HEK293T (cell line): ENCODE measurements at regions of chr1 and their contacts with region 1.

Region 1: GRCh38 chr1:225777583-225778336 is at the start of gene SRP9:
- DNase-seq: peak; percentile 99

Region 2: DNA sequence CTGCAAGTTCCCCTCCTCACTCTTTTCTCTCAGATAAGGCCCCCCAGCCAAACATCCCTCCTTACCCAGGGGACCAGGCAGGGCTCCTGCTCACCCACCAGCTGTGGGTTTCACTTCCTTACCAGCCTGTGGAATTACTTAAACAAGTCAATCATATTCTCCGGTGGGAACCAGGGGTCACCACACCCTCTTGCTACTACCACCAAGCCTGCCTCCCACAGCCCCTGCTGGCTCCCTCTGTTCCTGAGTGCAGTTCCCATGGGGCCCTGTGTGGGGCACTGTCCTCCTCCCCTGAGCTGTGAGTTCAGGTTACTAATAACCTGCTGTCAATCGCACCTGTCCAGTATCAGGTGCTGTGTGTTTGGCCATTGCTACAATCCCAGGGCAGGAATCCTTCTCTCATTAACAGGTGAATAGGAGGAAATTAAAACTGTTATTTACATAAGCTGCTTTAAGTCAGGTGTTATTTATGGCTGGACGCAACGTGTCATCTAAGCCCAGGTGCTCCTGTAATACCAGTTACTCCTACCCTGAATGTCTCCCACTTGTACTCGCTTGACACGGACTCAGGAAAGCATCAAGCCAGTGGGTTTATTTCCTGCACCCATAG is 296.8 kb before region 1 on chr1:
- CTCF ChIA-PET with region 1: interaction called, 25 read pairs
- POLR2A ChIA-PET with region 1: interaction called, 25 read pairs
- DNase-seq: peak; percentile 84

Region 3: GRCh38 chr1:225652729-225653462 is 124.9 kb before region 1 on chr1 and contains the start of gene ENAH:
- CTCF ChIA-PET with region 1: interaction called, 18 read pairs
- POLR2A ChIA-PET with region 1: interaction called, 34 read pairs
- DNase-seq: peak; percentile 82

Region 4: DNA sequence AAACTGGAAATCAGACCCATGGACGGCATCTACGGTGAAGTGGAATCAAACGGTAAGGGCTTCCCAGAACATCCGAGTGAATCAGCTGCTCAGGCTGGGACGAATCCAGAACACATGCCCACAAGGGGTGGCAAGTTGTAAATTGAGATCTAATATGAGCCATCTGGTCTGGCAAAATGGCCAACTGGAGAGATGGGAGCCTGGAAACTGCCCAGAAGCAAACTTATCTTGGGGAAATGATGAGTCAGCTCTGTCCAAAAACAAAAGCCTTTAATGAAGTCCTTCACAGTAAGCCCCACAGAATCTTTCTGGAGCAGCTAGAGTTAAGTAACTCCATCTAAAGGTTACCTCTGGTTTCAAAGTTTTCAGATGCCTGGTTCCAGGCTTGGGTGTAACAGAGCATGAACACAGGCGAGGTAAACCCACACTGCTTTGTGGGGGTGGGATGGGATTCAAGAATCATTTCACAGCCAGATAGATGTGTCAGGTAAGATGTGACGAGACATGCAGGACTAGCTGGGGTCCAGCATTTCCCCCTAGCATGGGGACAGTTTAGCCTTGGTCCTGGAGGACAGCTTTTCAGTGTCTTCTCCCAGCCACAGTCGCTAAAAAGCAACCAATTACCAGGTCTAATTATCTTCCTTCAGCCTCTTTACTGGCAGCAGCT is 10.7 kb before region 1 on chr1:
- CTCF ChIA-PET with region 1: interaction called, 13 read pairs
- POLR2A ChIA-PET with region 1: interaction called, 41 read pairs
- DNase-seq: no peak

Region 5: DNA sequence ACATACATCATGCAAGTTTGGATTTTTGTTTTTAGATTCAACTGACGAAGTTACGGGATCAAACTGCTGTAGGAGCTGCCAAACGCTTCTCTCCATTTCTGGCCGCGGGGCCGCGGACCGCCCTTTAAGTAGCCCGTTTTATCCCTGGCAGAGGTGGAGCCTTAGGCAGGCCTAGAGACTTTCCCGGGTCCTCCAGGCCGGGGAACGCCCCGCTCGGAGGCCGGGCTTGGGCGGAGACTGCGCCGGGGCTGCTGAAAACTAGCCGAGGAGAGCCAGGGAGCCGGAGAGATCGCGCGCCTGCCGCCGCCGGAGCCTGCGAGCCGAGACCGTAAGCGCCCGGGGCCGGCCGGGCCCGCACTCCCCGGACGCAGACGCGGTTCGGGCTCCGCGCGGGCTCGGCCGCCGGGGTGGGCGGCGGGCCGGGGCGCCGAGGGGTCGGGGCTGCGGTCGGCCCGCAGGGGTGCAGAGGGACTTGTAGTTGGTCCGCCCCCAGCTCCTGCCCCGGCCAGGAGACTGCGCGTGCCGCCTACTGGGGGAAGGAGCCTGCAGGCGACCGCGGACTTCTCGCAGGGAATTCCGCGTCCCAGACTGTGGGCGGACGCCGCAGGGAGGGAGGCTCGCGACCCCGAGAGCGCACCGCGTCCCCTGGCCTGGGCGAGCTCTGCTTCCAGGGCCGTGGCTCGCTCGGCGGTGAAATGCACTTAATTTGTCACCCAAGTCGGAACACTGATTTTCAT is 32.2 kb after region 1 on chr1 and contains the start of gene EPHX1:
- CTCF ChIA-PET with region 1: interaction called, 12 read pairs
- POLR2A ChIA-PET with region 1: interaction called, 34 read pairs
- DNase-seq: peak; percentile 95

Region 6: GRCh38 chr1:225881969-225882693 is 104.4 kb after region 1 on chr1 and contains the start of gene TMEM63A:
- CTCF ChIA-PET with region 1: interaction called, 3 read pairs
- POLR2A ChIA-PET with region 1: interaction called, 22 read pairs
- DNase-seq: peak; percentile 98

Region 7: GRCh38 chr1:225930566-225930965 is 152.8 kb after region 1 on chr1:
- CTCF ChIA-PET with region 1: no interaction called
- POLR2A ChIA-PET with region 1: no interaction called
- DNase-seq: no peak

Region 8: GRCh38 chr1:226233293-226233692 is 455.5 kb after region 1 on chr1:
- CTCF ChIA-PET with region 1: no interaction called
- POLR2A ChIA-PET with region 1: no interaction called
- DNase-seq: no peak